ENCODE measurements at regions of chr19 and their contacts with region 1.

Region 1: GRCh38 chr19:57389730-57390598 is at the start of gene ZNF548:
- DNase-seq: peak; percentile 92
- H3K4me3 Mint-ChIP-seq: peak within 1 kb of the TSS; percentile 94
- H3K27ac Mint-ChIP-seq: peak within 1 kb of the TSS; percentile 94
- H3K4me1 Mint-ChIP-seq: peaks cover 30% of the 10 kb centered on the region
- H3K27me3 Mint-ChIP-seq: no peaks in the 10 kb centered on the region
- total RNA-seq, gene ZNF548: 11.3 and 12.1 TPM in 2 replicates

Region 2: DNA sequence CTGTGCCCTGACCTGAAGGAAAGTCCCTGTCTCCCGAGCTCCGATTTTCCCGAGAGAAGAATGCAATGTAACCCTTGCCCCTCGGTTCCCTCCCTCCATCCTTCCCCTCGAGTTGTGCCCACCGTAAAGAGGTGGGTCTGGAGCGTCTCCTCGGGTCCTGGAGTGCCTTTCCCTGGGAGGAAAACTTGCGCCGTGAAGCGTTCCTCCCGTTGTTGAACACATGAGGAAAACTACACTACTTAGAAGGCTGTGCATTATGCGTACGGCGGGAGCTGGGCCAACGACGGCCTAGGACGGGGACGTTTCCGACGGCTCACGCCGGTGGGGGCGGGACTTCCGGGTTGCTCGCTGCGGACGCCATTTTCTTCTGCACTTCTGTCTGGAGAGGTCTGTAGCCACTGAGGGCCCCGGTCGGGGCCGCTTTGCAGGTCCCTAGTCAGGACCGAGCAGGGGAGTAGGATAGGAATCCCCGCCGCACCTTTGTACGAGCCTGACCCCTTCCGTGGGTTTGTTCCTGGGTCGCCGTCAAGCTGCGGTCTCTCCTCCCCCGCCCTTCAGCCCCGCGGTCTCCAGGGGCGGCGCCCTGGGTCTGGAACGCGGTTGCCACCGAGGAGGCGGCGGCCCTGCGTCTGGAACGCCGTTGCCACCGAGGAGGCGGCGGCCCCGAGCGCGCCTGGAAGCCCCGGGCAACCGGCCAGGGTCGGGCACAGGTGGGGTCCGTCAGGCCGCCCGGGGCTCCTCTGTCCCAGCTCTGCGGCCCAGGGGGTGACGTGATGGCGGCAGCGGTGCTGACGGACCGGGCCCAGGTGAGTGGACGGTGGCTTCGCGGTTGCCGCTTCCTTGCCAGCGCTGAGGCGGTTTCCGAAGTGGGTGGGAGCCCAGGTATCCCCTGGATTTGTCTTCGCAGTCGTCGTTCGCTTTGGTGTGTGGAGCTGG is 198.6 kb before region 1 on chr19 and contains the start of gene ZNF264:
- intact Hi-C with region 1: loop called (anchors 1 kb)
- DNase-seq: peak; percentile 86
- H3K4me3 Mint-ChIP-seq: peak within 1 kb of the TSS; percentile 94
- H3K27ac Mint-ChIP-seq: peak within 1 kb of the TSS; percentile 85
- H3K4me1 Mint-ChIP-seq: peaks cover 24% of the 10 kb centered on the region
- H3K27me3 Mint-ChIP-seq: no peaks in the 10 kb centered on the region
- total RNA-seq, gene ZNF264: 16.1 and 18.3 TPM in 2 replicates

Region 3: DNA sequence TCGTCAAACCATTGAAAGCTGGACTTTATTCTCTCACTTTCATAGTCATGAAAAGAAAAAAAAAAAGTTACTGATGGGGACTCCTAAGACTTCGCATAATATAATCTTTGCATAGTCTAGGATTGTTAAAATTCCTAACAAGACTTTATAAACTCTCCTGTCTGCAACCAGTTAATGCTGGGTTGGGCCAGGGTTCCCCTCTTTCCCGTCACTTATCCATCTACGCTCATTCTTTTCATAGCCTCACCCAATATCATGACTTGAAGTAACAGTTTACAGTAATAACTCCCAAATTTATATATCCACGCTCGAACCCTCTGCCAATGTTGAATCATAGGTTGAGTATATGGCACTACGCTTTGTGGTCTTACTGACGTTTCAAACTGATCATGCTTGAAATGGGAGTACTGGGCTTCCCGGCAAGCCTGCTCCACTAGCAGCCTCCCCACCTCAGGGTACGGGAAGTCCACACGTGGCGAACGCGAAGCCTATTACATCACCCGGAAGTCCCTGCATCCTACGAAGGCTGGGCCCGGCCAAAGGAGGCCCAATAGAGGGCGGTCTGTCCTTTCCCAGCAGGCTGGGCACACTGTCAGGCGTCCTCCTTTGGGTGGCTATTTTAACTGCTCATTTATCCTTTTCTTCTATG is 110.4 kb before region 1 on chr19:
- intact Hi-C with region 1: loop called (anchors 1 kb)
- DNase-seq: peak; percentile 75
- H3K4me3 Mint-ChIP-seq: no peak overlapping the region
- H3K27ac Mint-ChIP-seq: no peak overlapping the region
- H3K4me1 Mint-ChIP-seq: peaks cover 23% of the 10 kb centered on the region
- H3K27me3 Mint-ChIP-seq: peaks cover 2% of the 10 kb centered on the region

Region 4: DNA sequence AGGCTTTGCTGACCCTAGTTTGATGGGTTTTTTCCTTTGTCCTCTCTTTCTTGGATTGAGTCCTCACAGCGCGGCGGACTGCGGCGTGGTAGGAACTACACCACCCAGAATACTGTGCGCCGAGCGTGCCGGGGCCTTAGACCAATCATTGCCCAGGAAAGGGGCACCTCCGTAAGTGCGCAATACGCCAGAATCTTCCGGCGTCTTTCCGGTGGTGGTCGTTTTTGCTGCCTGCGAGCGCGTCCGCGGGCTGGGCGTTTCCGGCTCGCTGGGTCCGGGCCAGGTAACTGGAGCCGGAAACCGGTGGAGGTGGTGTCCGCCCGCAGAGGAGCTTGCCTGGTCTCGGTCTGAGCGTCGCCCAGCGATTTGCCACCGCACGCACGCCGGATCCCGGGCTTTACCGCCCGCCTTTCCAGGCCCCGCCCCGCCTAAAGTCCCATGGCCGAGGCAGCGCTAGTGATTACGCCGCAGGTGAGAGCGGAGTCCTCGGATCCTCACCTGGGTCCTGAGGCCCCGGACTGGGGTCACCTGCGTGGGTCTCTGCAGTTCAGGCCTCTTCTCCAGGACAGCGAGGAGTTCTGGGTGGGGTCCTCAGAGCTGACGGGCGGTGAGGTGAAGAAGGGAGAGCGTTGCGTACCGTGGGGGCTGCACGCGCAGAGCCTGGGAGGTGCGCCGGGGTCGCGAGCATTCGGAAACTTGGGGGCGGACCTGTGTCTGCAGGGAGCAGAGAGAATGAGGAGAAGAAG is 137.3 kb after region 1 on chr19 and contains the start of gene ZNF549:
- intact Hi-C with region 1: loop called (anchors 1 kb)
- DNase-seq: peak; percentile 85
- H3K4me3 Mint-ChIP-seq: peak within 1 kb of the TSS; percentile 93
- H3K27ac Mint-ChIP-seq: peak within 1 kb of the TSS; percentile 76
- H3K4me1 Mint-ChIP-seq: peaks cover 20% of the 10 kb centered on the region
- H3K27me3 Mint-ChIP-seq: peaks cover 2% of the 10 kb centered on the region
- total RNA-seq, gene ZNF549: 3.6 and 4.2 TPM in 2 replicates

Region 5: DNA sequence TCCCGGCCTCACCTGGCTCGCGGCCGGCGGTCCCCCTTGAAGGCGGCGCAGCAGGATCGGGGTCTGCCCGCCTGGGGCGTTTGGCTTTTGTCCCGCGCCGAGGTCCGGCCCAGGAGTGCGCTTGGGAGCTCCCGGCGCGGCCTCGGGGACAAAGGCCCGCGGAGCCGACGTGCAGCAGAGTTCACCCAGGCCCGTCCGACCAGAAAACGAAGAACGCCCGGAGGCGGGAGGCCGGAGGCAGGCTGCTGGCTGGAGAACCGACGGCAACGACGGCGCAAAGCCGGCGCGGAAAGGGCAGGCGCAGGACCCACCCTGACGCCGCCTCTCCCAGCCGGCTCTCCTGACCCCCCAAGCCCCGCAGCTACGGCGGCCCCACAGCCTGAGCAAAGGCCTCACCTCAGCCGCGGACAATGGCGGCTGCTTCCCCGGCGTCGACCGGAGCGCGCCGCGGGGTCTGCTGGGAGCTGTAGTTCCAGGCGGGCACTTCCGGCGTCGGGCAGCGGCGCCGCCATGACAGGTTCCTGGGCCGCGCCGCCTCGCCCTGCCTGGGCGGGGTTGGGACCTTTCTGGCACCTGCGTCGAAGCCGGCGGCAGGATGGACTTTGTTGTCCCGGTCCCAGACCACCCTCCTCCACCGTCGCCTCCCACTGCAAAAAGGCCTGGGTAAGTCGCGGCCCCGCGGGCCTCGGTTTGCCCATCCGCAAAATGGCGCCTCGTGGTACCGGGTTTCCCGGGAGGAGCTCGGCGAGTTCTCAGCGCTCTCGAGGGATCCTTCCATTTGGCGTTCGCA is 612.6 kb after region 1 on chr19 and contains the start of gene ZNF606:
- intact Hi-C with region 1: loop called (anchors 1 kb)
- DNase-seq: peak; percentile 80
- H3K4me3 Mint-ChIP-seq: peak within 1 kb of the TSS; percentile 84
- H3K27ac Mint-ChIP-seq: peak within 1 kb of the TSS; percentile 67
- H3K4me1 Mint-ChIP-seq: peaks cover 20% of the 10 kb centered on the region
- H3K27me3 Mint-ChIP-seq: no peaks in the 10 kb centered on the region
- total RNA-seq, gene ZNF606: 6.3 and 6.4 TPM in 2 replicates

Measured in activated T-helper 1 cell treated with anti-CD3 and anti-CD28 coated beads, Interleukin-12 subunit alpha, Interleukin-12 subunit beta, Interleukin-2, Interleukin-4 antibody, amounts not matched to agents 30 ng/mL and 10 ng/mL and 1 ng/mL, durations not matched to agents 14 hours and 24 hours and 36 hours (primary cell).